HAP-1 (cell line): ENCODE measurements at regions of chr4 and their contacts with region 1.

Region 1: DNA sequence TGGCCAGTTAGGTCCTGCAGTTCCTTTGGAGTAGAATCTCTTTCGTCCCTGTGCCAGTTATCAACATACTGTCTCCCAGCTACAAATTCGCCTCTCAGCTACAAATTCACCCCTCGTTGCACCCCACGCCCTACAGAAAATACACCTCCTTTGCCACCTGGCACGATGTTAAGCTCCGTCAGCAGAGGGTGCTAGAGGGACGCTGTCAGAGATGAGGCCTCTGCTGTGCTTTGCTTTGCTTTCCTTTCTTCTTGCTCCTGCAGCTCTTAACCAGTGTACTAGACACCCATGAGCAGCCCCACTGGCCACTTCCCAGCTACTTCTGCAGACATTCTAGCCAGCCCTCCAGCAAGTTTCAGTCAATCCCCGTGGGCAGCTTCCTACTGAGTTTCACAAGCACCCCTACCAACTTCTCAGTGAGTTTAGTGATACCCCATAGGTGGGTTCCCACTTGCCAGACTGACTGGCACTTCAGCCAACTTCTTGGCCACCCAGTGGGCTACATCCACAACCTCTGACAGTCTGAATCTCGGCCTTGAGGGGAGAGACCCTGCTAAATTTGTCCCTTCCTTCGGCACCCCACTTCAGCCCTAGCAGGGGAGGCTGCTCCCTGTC is 21.8 kb downstream of the HAUS3 start:
- DNase-seq: peak; percentile 73 to 87
- H3K4me3 ChIP-seq: no peak overlapping the region
- H3K4me1 ChIP-seq: no peaks in the 10 kb centered on the region
- H3K27me3 ChIP-seq: no peaks in the 10 kb centered on the region

Region 2: DNA sequence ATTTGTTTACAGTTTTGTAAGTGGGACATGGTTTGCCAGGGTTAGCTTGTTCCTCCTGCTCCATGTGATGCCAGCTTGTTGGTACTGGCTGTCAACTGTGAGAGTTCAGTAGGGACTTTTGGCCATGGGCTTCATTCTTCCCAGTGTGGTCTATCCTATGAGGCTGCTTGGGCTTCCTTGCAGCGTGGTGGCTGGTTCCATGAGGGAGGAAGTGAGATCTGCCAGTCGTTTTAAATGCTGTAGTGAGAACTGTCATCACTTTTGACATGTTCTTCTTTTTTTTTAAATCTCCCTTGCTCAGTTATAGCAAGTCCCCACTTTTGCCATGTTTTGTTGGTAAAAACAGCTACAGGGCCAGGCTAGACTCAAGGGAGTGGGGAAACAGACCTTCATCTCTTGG is 333.1 kb before region 1 on chr4:
- in situ Hi-C with region 1: no loop called
- DNase-seq: no peak
- H3K4me3 ChIP-seq: no peak overlapping the region
- H3K4me1 ChIP-seq: no peaks in the 10 kb centered on the region
- H3K27me3 ChIP-seq: no peaks in the 10 kb centered on the region

Region 3: DNA sequence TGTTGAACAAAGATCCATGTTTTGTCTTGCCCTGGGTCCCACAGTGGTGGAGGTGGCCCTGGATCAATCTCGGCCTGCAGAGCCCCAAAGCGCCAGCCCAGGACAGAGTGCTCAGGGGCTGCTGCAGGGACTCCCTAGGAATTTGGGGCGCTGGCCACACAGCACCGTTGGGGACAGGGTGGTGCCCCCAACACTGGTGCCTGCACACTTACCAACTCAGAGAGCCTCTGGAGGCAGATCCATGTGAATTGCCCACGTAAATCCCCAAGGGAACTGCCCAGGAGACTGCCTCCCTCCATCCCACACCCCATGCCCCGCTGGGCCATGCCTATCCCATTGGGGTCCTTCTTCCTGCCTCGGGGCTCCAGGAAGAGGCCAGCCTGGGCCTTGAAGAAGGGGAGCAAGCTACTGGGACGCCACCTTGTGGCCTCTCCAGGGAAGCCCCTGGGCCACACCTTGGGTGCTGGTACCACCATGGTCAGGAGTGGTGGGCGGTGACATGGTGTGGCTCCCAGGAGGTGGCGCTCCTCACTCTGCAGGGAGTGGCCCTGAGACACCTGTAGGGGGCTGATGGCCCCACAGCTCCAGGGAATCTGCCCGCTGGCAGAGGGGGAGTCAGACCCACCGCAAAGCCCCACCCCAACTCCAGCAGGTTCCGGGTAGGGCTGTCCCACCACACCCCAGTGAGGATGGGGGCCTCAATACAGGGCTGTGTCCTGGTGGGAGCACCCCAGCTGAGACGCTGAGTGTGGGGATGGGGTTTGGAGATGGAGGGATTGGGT is 221.5 kb after region 1 on chr4:
- in situ Hi-C with region 1: loop called (anchors 10 kb)
- DNase-seq: peak; percentile 63 to 93
- H3K4me3 ChIP-seq: no peak overlapping the region
- H3K4me1 ChIP-seq: no peaks in the 10 kb centered on the region
- H3K27me3 ChIP-seq: no peaks in the 10 kb centered on the region